ENCODE measurements at regions of chr3 and their contacts with region 1.

Region 1: GRCh38 chr3:196096382-196096953 is 14.6 kb upstream of the TFRC start:
- DNase-seq: peak; percentile 87
- ATAC-seq: peak; percentile 95
- H3K4me3 ChIP-seq: peak overlapping the region; percentile 19; the same call in 1 of the 2 replicates
- H3K27ac ChIP-seq: peak overlapping the region; percentile 90
- H3K4me1 ChIP-seq: peaks cover 29% of the 10 kb centered on the region
- H3K27me3 ChIP-seq: no peaks in the 10 kb centered on the region
- CTCF ChIP-seq: no peak
- EP300 ChIP-seq: peak in 1 of 2 experiments; percentile 15; a peak in 1 of 4 replicates
- POLR2A ChIP-seq: no peak
- RAD21 ChIP-seq: no peak

Region 2: DNA sequence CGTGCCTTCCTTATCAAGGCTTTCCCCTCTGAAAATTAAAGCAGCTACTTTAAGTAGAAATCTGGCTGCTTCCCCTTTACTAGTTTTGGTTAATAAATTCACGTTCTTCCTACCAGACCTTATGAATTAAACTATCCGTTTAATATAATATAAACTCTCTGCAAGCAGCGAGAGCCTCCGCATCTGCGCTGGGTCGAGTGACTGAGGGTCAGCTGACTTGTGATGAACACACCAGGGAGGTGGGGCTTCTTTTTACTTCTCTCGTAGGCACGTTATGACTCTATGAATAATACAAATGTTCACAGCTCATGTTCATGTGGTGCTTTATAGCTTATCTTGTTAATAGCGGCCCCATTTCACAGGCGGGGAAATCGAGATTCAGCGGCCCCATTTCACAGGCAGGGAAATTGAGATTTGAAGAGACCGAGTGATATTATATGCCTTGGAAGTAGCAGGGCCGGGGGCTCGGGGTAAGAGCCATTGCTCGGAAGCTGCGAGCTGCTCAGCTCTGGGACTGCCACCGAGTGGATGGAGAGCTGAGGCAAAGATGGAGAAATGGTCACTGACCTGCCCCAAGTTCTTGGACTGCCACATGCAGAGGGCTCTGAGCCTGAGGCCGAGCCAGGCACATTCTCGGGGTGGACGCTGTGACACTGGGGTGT is 293.0 kb before region 1 on chr3:
- CTCF ChIA-PET with region 1: no interaction called
- POLR2A ChIA-PET with region 1: no interaction called
- RAD21 ChIA-PET with region 1: no interaction called
- SMC1A ChIA-PET with region 1: no interaction called
- in situ Hi-C with region 1: no loop called
- intact Hi-C with region 1: no loop called
- DNase-seq: no peak
- ATAC-seq: no peak
- H3K4me3 ChIP-seq: no peak overlapping the region
- H3K27ac ChIP-seq: no peak overlapping the region
- H3K4me1 ChIP-seq: no peaks in the 10 kb centered on the region
- H3K27me3 ChIP-seq: peaks cover 0 to 5% of the 10 kb centered on the region in 2 experiments; a peak in 3 of 4 replicates
- CTCF ChIP-seq: no peak
- EP300 ChIP-seq: no peak
- POLR2A ChIP-seq: no peak
- RAD21 ChIP-seq: no peak

Region 3: GRCh38 chr3:196081791-196082618 is 14.5 kb before region 1 on chr3 and contains the start of gene TFRC:
- CTCF ChIA-PET with region 1: interaction called, 3 read pairs
- POLR2A ChIA-PET with region 1: interaction called, 85 read pairs
- RAD21 ChIA-PET with region 1: interaction called, 23 read pairs
- SMC1A ChIA-PET with region 1: interaction called, 26 read pairs
- in situ Hi-C with region 1: no loop called
- intact Hi-C with region 1: no loop called
- DNase-seq: peak; percentile 82
- ATAC-seq: peak; percentile 91
- H3K4me3 ChIP-seq: peak within 1 kb of the TSS; percentile 94
- H3K27ac ChIP-seq: peak within 1 kb of the TSS; percentile 96
- H3K4me1 ChIP-seq: peaks cover 8% of the 10 kb centered on the region
- H3K27me3 ChIP-seq: no peaks in the 10 kb centered on the region
- CTCF ChIP-seq: no peak
- EP300 ChIP-seq: 0 out of 4 replicates have a peak, but pooled peaks of 1 of the 2 experiments have one; percentile 45
- POLR2A ChIP-seq: peak; percentile 100
- RAD21 ChIP-seq: no peak
- polyA plus RNA-seq, gene TFRC: 123 to 132 TPM

Region 4: GRCh38 chr3:196115678-196116083 is 19.2 kb after region 1 on chr3:
- CTCF ChIA-PET with region 1: interaction called, 35 read pairs
- POLR2A ChIA-PET with region 1: interaction called, 61 read pairs
- RAD21 ChIA-PET with region 1: interaction called, 77 read pairs
- SMC1A ChIA-PET with region 1: interaction called, 99 read pairs
- in situ Hi-C with region 1: no loop called
- intact Hi-C with region 1: no loop called
- DNase-seq: peak; percentile 80
- ATAC-seq: peak; percentile 75
- H3K4me3 ChIP-seq: peak overlapping the region; percentile 37; the same call in 1 of the 2 replicates
- H3K27ac ChIP-seq: peak overlapping the region; percentile 86
- H3K4me1 ChIP-seq: peaks cover 69% of the 10 kb centered on the region
- H3K27me3 ChIP-seq: no peaks in the 10 kb centered on the region
- CTCF ChIP-seq: no peak
- EP300 ChIP-seq: peak; percentile 72 to 82; a peak in 3 of 4 replicates
- POLR2A ChIP-seq: no peak
- RAD21 ChIP-seq: 0 out of 2 replicates have a peak, but pooled peaks have one; percentile 19

Region 5: DNA sequence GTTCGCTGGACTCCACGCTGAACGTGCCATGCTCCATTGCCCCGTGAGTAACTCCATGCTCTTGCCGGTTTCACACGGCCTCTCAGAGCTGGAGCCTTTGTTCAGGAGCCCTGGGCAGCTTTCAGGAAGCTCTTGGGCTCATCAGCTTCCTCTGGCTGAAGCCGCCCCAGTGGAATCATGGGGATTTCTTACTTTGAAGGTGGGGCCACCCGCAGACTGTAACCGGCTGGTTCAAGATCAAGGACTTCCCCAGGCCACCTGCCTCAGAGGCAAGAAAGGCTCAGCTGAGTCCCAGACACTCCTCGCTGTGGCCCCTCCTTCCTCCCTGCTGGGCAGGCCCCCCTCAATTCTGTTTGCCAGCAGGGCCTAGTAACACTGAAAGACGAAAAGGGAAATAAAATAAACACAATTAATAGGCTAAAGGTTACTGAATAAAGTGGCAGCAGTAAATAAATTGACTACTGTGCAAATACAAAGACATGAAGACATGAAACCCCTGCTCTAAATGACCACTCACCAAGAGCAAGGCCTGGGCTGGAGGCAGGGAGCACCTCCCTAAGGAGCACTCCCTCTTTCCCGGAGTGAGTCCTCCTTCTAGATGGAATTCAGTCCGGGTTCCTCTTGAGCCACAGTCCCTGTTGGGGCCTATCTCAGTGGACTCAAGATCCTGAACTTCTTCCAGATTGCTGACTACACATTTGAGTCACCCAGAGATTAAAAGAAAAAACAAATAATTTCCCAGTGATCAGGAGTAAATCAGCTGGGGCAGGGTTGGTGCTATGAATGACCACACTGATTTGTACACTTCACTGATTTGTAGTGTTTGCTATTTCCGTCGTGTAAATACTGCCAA is 63.7 kb after region 1 on chr3:
- CTCF ChIA-PET with region 1: interaction called, 6 read pairs
- POLR2A ChIA-PET with region 1: interaction called, 7 read pairs
- RAD21 ChIA-PET with region 1: interaction called, 21 read pairs
- SMC1A ChIA-PET with region 1: interaction called, 13 read pairs
- in situ Hi-C with region 1: no loop called
- intact Hi-C with region 1: no loop called
- DNase-seq: peak; percentile 72
- ATAC-seq: peak; percentile 100
- H3K4me3 ChIP-seq: peak overlapping the region; percentile 14; the same call in 1 of the 2 replicates
- H3K27ac ChIP-seq: peak overlapping the region; percentile 66
- H3K4me1 ChIP-seq: peaks cover 12% of the 10 kb centered on the region
- H3K27me3 ChIP-seq: no peaks in the 10 kb centered on the region
- CTCF ChIP-seq: no peak
- EP300 ChIP-seq: 0 out of 4 replicates have a peak, but pooled peaks of 1 of the 2 experiments have one; percentile 10
- POLR2A ChIP-seq: peak; percentile 74
- RAD21 ChIP-seq: no peak

Region 6: GRCh38 chr3:196186651-196187573 is 90.4 kb after region 1 on chr3:
- CTCF ChIA-PET with region 1: interaction called, 8 read pairs
- POLR2A ChIA-PET with region 1: interaction called, 51 read pairs
- RAD21 ChIA-PET with region 1: interaction called, 27 read pairs
- SMC1A ChIA-PET with region 1: interaction called, 81 read pairs
- in situ Hi-C with region 1: no loop called
- intact Hi-C with region 1: no loop called
- DNase-seq: peak; percentile 64
- ATAC-seq: peak; percentile 67
- H3K4me3 ChIP-seq: peak overlapping the region; percentile 66; the same call in 1 of the 2 replicates
- H3K27ac ChIP-seq: peak overlapping the region; percentile 95
- H3K4me1 ChIP-seq: peaks cover 70% of the 10 kb centered on the region
- H3K27me3 ChIP-seq: no peaks in the 10 kb centered on the region
- CTCF ChIP-seq: no peak
- EP300 ChIP-seq: no peak; a peak in 2 of 4 replicates
- POLR2A ChIP-seq: peak; percentile 74
- RAD21 ChIP-seq: no peak